ENCODE measurements at regions of chr17 and their contacts with region 1.

Region 1: GRCh38 chr17:67575325-67575724 is 142.4 kb upstream of the NOL11 start:
- DNase-seq: no peak
- ATAC-seq: peak; percentile 23
- H3K4me3 Mint-ChIP-seq: peak overlapping the region; percentile 64
- H3K27ac Mint-ChIP-seq: peak overlapping the region; percentile 80
- H3K4me1 Mint-ChIP-seq: peaks cover 73% of the 10 kb centered on the region
- H3K27me3 Mint-ChIP-seq: no peaks in the 10 kb centered on the region
- CTCF ChIP-seq: no peak

Region 2: DNA sequence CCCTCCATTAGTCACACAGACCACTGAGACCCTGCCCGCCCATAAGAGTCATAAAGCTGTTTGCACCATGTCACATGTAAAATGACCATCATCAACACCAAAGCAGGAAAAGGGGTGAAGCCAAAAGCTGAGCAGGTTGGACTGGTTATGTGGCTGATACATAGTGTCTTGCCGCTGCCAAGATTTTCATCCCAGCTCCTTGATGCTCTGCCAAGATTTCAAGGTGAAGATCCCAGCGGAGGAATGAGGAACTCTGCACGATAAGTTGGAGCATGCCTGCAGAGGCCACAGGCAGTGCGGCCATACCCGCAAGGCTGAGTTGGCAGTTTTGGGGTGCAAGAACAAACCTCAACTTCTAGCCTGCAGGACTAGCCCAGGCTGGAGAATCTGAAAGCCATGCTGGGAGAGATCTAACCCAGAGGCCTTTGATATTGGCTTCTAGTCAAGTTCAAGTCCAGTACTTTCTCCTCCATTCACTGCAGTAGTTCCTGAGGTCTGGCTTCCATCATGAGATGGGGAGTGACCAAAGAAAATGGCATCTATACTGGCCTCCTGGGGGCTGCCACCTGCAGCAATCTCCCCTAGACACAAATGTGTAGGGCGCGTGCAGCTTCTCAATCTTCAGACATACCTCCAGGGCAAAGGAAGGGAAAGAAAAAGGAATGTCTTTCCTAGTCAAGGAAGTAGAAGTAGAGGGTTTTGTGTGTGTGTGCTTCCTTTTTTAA is 62.8 kb after region 1 on chr17:
- CTCF ChIA-PET with region 1: no interaction called
- POLR2A ChIA-PET with region 1: interaction called, 11 read pairs
- intact Hi-C with region 1: no loop called
- DNase-seq: no peak
- ATAC-seq: no peak
- H3K4me3 Mint-ChIP-seq: no peak overlapping the region
- H3K27ac Mint-ChIP-seq: no peak overlapping the region
- H3K4me1 Mint-ChIP-seq: no peaks in the 10 kb centered on the region
- H3K27me3 Mint-ChIP-seq: no peaks in the 10 kb centered on the region
- CTCF ChIP-seq: no peak